CD4-positive, alpha-beta memory T cell (primary cell): ENCODE measurements at regions of chr11 and their contacts with region 1.

Region 1: DNA sequence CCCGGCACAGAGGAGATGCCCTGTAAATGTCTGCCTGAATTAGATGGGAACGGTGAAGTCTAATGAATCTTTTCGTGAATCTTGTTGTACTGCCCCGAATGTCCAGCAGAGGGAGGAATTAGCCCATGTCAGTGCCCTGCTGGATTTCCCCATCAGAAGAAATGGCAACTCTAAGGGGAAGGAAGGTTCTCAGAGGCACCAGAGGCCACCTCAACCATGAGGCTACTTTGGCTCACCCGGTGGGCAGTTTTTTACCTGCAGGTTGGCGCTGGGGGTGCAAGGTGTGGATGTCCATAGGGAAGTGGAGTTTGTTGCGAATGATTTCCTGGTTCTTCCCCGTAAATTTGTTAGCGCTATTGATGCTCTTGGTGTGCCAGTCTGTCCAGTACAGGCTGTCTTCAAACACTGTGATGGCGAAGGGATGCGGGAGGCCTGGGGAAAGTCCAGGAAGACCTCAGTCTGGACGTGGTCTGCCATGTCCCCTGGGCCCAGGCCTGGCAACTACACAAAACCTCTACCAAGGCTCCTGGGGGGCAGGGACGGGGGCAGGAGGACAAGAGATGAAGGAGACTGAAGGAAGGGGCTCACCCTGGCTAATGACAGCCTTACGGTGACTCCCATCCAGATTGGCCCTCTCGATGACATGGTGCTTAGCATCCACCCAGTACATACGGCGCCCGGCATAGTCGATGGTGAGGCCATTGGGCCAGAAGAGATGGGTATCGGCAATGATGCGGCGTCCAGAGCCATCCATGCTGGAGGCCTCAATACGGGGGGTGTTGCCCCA is 28.5 kb downstream of the LRP4 start:
- DNase-seq: peak; percentile 62 to 71 (median 70)
- H3K4me3 ChIP-seq: no peak overlapping the region
- H3K4me3 Mint-ChIP-seq: no peak overlapping the region
- H3K27ac ChIP-seq: no peak overlapping the region
- H3K27ac Mint-ChIP-seq: peak overlapping the region in 1 of 7 donors; percentile 46
- H3K4me1 ChIP-seq: no peaks in the 10 kb centered on the region
- H3K4me1 Mint-ChIP-seq: peaks cover 0 to 2% (median 0%) of the 10 kb centered on the region in 4 donors
- H3K27me3 ChIP-seq: no peaks in the 10 kb centered on the region
- H3K27me3 Mint-ChIP-seq: peaks cover 3 to 7% of the 10 kb centered on the region in 2 donors

Region 2: DNA sequence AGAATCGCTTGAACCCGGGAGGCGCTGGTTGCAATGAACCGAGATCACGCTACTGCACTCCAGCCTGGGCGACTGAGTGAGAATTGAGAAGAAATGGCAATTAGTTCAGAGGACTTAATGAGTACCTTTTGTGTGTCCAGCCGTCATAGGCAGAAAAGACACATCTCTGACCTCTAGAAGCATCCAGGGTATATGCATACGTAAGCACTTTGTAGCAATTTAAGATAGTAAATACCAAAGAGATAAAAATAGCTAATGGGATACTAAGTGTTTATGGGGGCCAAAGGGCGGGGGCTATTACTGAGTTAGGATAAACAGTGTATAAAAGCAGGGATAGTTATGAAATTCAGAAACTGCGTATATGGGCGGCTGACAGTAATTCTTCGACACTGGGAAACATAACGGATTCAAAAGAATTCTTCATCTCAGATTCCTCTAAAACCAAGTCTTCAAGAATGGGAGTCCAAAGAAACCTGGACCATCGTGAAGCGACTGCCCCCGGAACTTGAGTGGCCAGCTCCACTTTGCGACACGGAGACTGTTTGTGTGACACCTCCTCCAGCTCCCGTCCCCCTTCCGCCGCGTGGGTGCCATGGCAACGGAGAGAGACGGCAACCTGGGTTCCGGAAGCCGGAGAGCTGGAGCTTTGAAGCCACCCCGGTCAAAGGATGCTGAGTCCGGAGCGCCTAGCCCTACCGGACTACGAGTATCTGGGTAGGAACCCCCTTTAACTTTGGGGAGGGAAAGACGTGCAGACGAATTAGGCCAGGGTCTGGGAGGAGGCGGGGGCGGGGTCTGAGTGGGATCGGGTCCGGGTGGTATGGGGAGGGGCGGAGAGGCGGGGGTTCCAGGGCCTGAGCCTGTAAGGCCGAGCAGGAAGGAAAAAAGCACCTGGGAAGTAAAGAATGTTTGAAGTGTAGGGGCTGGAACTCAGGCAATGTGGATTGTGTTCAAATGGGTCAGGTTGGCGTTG is 46.5 kb after region 1 on chr11 and contains the start of gene CSTPP1:
- CTCF ChIA-PET with region 1: no interaction called
- POLR2A ChIA-PET with region 1: no interaction called
- intact Hi-C with region 1: no loop called
- DNase-seq: peak; percentile 87 to 91 (median 88)
- H3K4me3 ChIP-seq: peak within 1 kb of the TSS; percentile 39 to 50
- H3K4me3 Mint-ChIP-seq: peak within 1 kb of the TSS; percentile 91 to 97 (median 94)
- H3K27ac ChIP-seq: peak within 1 kb of the TSS; percentile 41
- H3K27ac Mint-ChIP-seq: peak within 1 kb of the TSS; percentile 88 to 97 (median 96)
- H3K4me1 ChIP-seq: peaks cover 12% of the 10 kb centered on the region
- H3K4me1 Mint-ChIP-seq: peaks cover 14 to 24% (median 17%) of the 10 kb centered on the region in 4 donors
- H3K27me3 ChIP-seq: no peaks in the 10 kb centered on the region
- H3K27me3 Mint-ChIP-seq: peaks cover 0 to 7% of the 10 kb centered on the region in 2 donors
- total RNA-seq, gene CSTPP1: 12.4 to 12.8 TPM

Region 3: DNA sequence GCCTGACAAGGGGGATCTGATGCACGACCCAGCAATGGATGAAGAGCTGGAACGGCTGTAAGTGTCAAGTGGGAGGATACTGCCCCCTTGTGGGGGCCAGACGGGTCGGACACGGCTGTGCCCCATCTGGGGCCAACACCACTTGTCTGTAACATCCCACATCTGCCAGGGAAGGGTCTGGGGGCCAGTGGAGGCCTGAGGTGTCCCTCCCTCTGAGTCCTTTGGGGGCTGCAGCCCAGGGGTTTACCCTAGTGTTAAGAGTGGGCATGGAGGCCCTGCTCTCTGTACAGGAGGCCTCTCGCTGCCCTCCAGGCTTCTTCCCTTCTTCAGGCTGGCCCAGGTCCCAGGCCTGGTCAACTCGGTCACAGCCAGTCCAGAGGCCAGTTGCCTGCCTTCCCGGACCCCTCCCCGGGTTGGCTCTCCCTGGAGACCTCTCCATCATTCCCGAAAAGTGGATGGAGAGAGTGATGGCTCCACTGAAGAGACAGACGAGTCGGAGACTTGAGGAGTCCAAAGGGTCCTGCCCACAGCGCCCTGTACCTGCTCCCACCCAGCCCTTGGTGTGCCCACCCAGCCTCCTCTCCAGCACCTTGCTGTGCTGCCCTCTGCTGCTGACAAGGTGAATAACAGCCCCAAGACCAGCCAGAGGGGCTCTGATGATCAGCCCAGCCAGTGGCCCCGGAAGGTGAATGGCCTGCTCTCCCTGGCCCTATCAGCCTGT is 271.4 kb after region 1 on chr11:
- CTCF ChIA-PET with region 1: interaction called, 44 read pairs
- POLR2A ChIA-PET with region 1: no interaction called
- intact Hi-C with region 1: loop called (anchors 1 kb)
- DNase-seq: peak; percentile 49 to 59 (median 55)
- H3K4me3 ChIP-seq: no peak overlapping the region
- H3K4me3 Mint-ChIP-seq: no peak overlapping the region
- H3K27ac ChIP-seq: no peak overlapping the region
- H3K27ac Mint-ChIP-seq: peak overlapping the region in 1 of 7 donors; percentile 75
- H3K4me1 ChIP-seq: no peaks in the 10 kb centered on the region
- H3K4me1 Mint-ChIP-seq: peaks cover 0 to 1% (median 0%) of the 10 kb centered on the region in 4 donors
- H3K27me3 ChIP-seq: no peaks in the 10 kb centered on the region
- H3K27me3 Mint-ChIP-seq: no peaks in the 10 kb centered on the region